Dendritic cell treated with granulocyte-macrophage colony-stimulating factor and Interleukin-4, amounts not matched to agents 40 ng/mL and 50 ng/mL, for 4 days (primary cell): ENCODE measurements at regions of chr1 and their contacts with region 1.

Region 1: GRCh38 chr1:202811296-202812165 is 777 bp downstream of the PCAT6 start:
- H3K4me3 Mint-ChIP-seq: peak overlapping the region; percentile 90
- H3K27ac Mint-ChIP-seq: peak overlapping the region; percentile 89
- H3K4me1 Mint-ChIP-seq: peaks cover 32% of the 10 kb centered on the region
- H3K27me3 Mint-ChIP-seq: peaks cover 20% of the 10 kb centered on the region

Region 2: GRCh38 chr1:202571347-202572339 is 239.9 kb before region 1 on chr1:
- intact Hi-C with region 1: no loop called
- H3K4me3 Mint-ChIP-seq: no peak overlapping the region
- H3K27ac Mint-ChIP-seq: no peak overlapping the region
- H3K4me1 Mint-ChIP-seq: no peaks in the 10 kb centered on the region
- H3K27me3 Mint-ChIP-seq: peaks cover 67% of the 10 kb centered on the region

Region 3: DNA sequence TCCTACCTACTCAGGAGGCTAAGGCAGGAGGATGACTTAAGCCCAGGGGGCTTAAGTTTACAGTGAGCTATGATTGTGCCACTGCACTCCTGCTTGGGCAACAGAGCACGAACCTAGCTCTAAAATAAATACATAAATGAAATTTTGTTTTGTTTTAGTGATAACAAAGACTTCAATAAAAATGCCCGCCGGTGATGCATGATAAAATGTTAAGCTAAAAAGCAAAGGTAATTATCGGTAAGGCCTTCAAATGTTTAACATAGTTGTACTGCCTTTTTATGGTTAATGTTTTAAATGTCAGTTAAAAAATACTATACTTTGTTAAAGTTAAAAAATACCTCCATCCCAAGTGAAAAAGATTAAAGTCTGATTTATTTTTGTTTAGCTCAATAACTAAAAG is 30.4 kb before region 1 on chr1:
- intact Hi-C with region 1: no loop called
- H3K4me3 Mint-ChIP-seq: no peak overlapping the region
- H3K27ac Mint-ChIP-seq: no peak overlapping the region
- H3K4me1 Mint-ChIP-seq: peaks cover 6% of the 10 kb centered on the region
- H3K27me3 Mint-ChIP-seq: no peaks in the 10 kb centered on the region

Region 4: GRCh38 chr1:202861420-202862200 is 50.1 kb after region 1 on chr1:
- intact Hi-C with region 1: loop called (anchors 2 kb)
- H3K4me3 Mint-ChIP-seq: peak overlapping the region; percentile 92
- H3K27ac Mint-ChIP-seq: peak overlapping the region; percentile 68
- H3K4me1 Mint-ChIP-seq: peaks cover 33% of the 10 kb centered on the region
- H3K27me3 Mint-ChIP-seq: peaks cover 42% of the 10 kb centered on the region